ENCODE measurements at regions of chr3 and their contacts with region 1.

Region 1: GRCh38 chr3:76930712-76931111 is 109.2 kb upstream of the ROBO2 start:
- DNase-seq: no peak
- H3K4me3 ChIP-seq: no peak overlapping the region
- H3K27ac ChIP-seq: no peak overlapping the region
- H3K4me1 ChIP-seq: no peaks in the 10 kb centered on the region
- CTCF ChIP-seq: no peak

Region 2: GRCh38 chr3:75938921-75939320 is 991.8 kb before region 1 on chr3:
- CTCF ChIA-PET with region 1: no interaction called
- POLR2A ChIA-PET with region 1: interaction called, 10 read pairs
- intact Hi-C with region 1: no loop called
- DNase-seq: no peak
- H3K4me3 ChIP-seq: no peak overlapping the region
- H3K27ac ChIP-seq: no peak overlapping the region
- H3K4me1 ChIP-seq: no peaks in the 10 kb centered on the region
- CTCF ChIP-seq: no peak

Region 3: GRCh38 chr3:77065750-77066149 is 135.0 kb after region 1 on chr3:
- CTCF ChIA-PET with region 1: no interaction called
- POLR2A ChIA-PET with region 1: no interaction called
- intact Hi-C with region 1: no loop called
- DNase-seq: no peak
- H3K4me3 ChIP-seq: no peak overlapping the region
- H3K27ac ChIP-seq: no peak overlapping the region
- H3K4me1 ChIP-seq: no peaks in the 10 kb centered on the region
- CTCF ChIP-seq: no peak

Region 4: GRCh38 chr3:78872195-78872594 is 1941.5 kb after region 1 on chr3:
- CTCF ChIA-PET with region 1: no interaction called
- POLR2A ChIA-PET with region 1: no interaction called
- intact Hi-C with region 1: no loop called
- DNase-seq: no peak
- H3K4me3 ChIP-seq: no peak overlapping the region
- H3K27ac ChIP-seq: no peak overlapping the region
- H3K4me1 ChIP-seq: no peaks in the 10 kb centered on the region
- CTCF ChIP-seq: no peak